ENCODE measurements at regions of chr1 and their contacts with region 1.

Region 1: DNA sequence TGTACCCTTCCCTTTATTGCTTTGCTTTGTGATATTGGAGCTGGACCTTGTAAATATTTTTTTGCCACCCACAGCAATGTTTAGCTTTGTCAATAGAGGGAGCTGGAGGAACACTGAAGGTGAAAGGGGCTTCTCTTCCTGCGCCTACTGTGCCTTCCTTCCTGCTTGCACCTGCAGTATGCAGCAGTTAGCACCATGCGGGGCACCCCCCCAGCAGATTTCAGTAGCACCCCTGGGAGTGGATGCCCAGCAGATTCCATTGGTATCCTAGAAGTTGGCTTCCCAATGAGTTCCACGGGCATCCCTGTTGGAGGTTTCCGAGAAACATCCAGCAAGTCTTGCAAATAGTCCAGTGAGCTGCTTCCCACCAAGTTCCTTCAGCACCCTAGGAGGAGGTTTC is 25.6 kb downstream of the S100A10 start:
- DNase-seq: peak; percentile 66
- H3K4me3 Mint-ChIP-seq: no peak overlapping the region
- H3K27ac Mint-ChIP-seq: no peak overlapping the region
- H3K4me1 Mint-ChIP-seq: peaks cover 25% of the 10 kb centered on the region
- H3K27me3 Mint-ChIP-seq: peaks cover 13% of the 10 kb centered on the region

Region 2: GRCh38 chr1:151526735-151527525 is 441.1 kb before region 1 on chr1:
- CTCF ChIA-PET with region 1: no interaction called
- DNase-seq: no peak
- H3K4me3 Mint-ChIP-seq: no peak overlapping the region
- H3K27ac Mint-ChIP-seq: no peak overlapping the region
- H3K4me1 Mint-ChIP-seq: no peaks in the 10 kb centered on the region
- H3K27me3 Mint-ChIP-seq: no peaks in the 10 kb centered on the region

Region 3: DNA sequence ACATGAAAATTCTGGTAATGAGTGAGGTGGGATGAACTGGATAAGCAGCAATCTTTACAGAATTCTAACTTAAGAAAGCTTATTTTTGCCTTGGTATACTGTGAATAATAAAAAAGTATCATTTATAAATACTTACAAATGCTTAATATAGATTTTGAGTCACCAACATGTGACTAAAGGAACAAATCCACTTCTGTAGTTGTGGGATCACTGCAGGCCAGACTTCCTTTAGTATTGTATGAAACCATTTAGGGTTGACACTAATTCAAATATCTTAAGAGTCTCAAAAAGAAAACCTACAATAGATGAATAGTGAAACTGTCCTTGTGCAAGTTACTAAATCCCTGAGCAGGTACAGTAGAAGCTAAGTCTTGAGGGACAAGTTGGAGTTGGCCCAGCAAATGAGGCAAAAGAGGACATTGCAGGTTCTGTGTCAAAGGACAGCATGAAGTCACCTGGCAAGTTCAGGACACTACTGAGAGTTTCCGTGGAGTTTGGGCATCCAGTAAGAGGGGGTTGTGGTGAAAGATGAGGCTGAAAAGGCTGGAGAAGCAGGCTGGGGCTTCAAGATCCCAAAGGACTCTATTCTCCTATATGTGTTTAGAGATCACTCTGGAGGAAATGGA is 52.9 kb before region 1 on chr1:
- CTCF ChIA-PET with region 1: no interaction called
- DNase-seq: no peak
- H3K4me3 Mint-ChIP-seq: no peak overlapping the region
- H3K27ac Mint-ChIP-seq: no peak overlapping the region
- H3K4me1 Mint-ChIP-seq: peaks cover 2% of the 10 kb centered on the region
- H3K27me3 Mint-ChIP-seq: peaks cover 11% of the 10 kb centered on the region

Region 4: GRCh38 chr1:151934048-151934493 is 34.0 kb before region 1 on chr1:
- CTCF ChIA-PET with region 1: interaction called, 35 read pairs
- DNase-seq: peak; percentile 51
- H3K4me3 Mint-ChIP-seq: no peak overlapping the region
- H3K27ac Mint-ChIP-seq: no peak overlapping the region
- H3K4me1 Mint-ChIP-seq: peaks cover 2% of the 10 kb centered on the region
- H3K27me3 Mint-ChIP-seq: peaks cover 14% of the 10 kb centered on the region

Region 5: DNA sequence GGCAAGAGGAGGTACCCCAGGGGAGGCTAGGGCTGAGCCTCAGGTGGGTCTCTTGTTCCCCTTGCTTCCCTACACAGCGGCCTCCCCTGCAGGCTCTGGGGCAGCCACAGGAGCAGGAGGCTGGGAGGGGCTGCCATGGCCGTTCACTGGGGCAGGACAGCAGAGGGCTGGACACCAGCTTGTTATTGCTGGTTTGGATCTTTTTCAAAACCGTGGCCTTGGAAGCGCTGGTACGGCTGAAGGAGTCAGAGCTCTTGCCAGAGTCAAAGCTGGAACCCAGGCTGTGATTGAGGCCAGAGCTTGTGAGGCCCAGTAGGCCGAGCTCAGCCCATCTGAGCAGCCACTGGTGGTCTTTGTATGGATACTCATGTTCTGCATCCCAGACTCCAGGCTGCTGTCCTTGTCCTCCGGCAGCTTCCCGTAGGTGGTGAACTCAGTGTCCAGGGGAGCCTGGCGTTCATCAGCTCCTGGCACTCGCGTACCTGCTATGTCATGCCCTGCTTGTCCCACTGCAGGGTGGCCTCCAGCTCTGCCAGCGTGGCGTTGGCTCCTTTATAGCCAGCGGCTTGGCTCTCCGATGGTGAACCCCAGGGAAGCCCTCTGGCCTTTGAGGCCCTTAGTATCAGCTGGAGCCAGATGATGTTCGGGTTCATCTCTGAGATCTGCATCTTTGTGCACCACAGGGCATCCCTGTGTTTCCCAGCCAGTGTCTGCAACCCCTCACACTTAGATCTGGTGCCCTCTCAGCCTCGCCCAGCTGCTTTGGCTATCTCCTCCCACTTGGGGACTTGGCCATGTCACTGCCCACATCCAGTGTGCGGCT is 18.5 kb before region 1 on chr1:
- CTCF ChIA-PET with region 1: interaction called, 14 read pairs
- DNase-seq: no peak
- H3K4me3 Mint-ChIP-seq: no peak overlapping the region
- H3K27ac Mint-ChIP-seq: no peak overlapping the region
- H3K4me1 Mint-ChIP-seq: peaks cover 23% of the 10 kb centered on the region
- H3K27me3 Mint-ChIP-seq: peaks cover 23% of the 10 kb centered on the region

Region 6: GRCh38 chr1:151993654-151994496 is 25.8 kb after region 1 on chr1 and contains the start of gene S100A10:
- CTCF ChIA-PET with region 1: interaction called, 208 read pairs
- DNase-seq: peak; percentile 89
- H3K4me3 Mint-ChIP-seq: peak within 1 kb of the TSS; percentile 93
- H3K27ac Mint-ChIP-seq: peak within 1 kb of the TSS; percentile 97
- H3K4me1 Mint-ChIP-seq: peaks cover 50% of the 10 kb centered on the region
- H3K27me3 Mint-ChIP-seq: peaks cover 8% of the 10 kb centered on the region

Measured in activated naive CD4-positive, alpha-beta T cell treated with anti-CD3 and anti-CD28 coated beads, Interleukin-2, amount 10 ng/mL, durations not matched to agents 7 days and 5 days (primary cell).